IMR-90 (cell line): ENCODE measurements at regions of chr1 and their contacts with region 1.

Region 1: GRCh38 chr1:117895482-117896114 is 33.8 kb downstream of the GDAP2 start:
- DNase-seq: peak; percentile 92
- ATAC-seq: peak; percentile 89
- H3K4me3 ChIP-seq: no peak overlapping the region
- H3K27ac ChIP-seq: no peak overlapping the region
- H3K4me1 ChIP-seq: peaks cover 2% of the 10 kb centered on the region; the same call in 1 of the 2 replicates
- H3K27me3 ChIP-seq: no peaks in the 10 kb centered on the region
- CTCF ChIP-seq: peak; percentile 94
- POLR2A ChIP-seq: no peak; the same call in 1 of the 2 replicates
- RAD21 ChIP-seq: peak; percentile 97

Region 2: DNA sequence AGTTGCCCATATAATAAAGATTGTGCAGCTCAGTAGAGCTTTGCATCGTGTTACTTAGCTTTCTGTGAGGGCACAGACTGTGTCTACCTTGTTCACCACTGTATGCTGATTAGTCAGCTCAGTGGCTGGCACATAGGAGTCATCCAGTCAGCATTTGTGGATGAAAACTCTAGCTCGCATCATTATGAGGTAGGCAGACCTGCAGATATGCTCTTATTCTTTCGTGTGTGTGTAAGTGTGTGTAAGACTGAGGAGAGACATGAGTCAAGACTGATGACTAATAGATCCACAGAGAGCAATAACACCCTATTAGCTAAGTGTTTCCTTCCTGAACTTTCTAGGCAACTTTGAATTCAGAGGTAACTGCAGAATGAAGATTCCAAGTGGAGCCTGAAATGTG is 818.3 kb before region 1 on chr1:
- CTCF ChIA-PET with region 1: no interaction called
- POLR2A ChIA-PET with region 1: no interaction called
- dilution Hi-C with region 1: no loop called
- in situ Hi-C with region 1: no loop called
- intact Hi-C with region 1: loop called (anchors 10 kb)
- DNase-seq: peak; percentile 96
- ATAC-seq: peak; percentile 92
- H3K4me3 ChIP-seq: no peak overlapping the region
- H3K27ac ChIP-seq: no peak overlapping the region
- H3K4me1 ChIP-seq: peaks cover 3% of the 10 kb centered on the region
- H3K27me3 ChIP-seq: no peaks in the 10 kb centered on the region
- CTCF ChIP-seq: no peak
- POLR2A ChIP-seq: no peak
- RAD21 ChIP-seq: no peak

Region 3: GRCh38 chr1:117367047-117368018 is 528.3 kb before region 1 on chr1 and contains the start of gene MAN1A2:
- CTCF ChIA-PET with region 1: no interaction called
- POLR2A ChIA-PET with region 1: no interaction called
- dilution Hi-C with region 1: no loop called
- in situ Hi-C with region 1: no loop called
- intact Hi-C with region 1: loop called (anchors 5 kb)
- DNase-seq: peak; percentile 69
- ATAC-seq: peak; percentile 83
- H3K4me3 ChIP-seq: peak within 1 kb of the TSS; percentile 90
- H3K27ac ChIP-seq: peak within 1 kb of the TSS; percentile 97
- H3K4me1 ChIP-seq: peaks cover 6% of the 10 kb centered on the region
- H3K27me3 ChIP-seq: no peaks in the 10 kb centered on the region
- CTCF ChIP-seq: no peak
- POLR2A ChIP-seq: no peak
- RAD21 ChIP-seq: no peak
- total RNA-seq, gene MAN1A2: 29.4 and 60.8 TPM in 2 replicates

Region 4: DNA sequence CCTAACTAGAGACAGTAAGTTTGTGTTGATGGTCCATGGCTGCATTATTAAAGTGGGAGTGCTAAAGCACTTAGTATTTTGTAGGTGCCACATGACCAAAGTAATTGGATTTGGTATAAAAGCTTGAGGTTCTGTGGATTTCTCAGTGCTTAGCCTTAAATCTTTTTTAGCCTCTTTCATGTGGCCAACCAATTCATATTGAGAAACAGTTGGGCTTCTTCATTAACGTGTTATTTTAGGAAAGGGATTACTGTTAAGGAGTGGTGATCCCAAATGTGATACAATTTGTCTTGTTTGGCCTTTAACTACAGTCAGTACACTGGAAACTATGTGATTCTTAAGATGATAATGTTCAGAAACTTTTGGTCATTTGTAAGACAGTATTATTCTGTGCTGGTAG is 502.8 kb before region 1 on chr1:
- CTCF ChIA-PET with region 1: no interaction called
- POLR2A ChIA-PET with region 1: no interaction called
- dilution Hi-C with region 1: no loop called
- in situ Hi-C with region 1: no loop called
- intact Hi-C with region 1: no loop called
- DNase-seq: no peak
- ATAC-seq: no peak
- H3K4me3 ChIP-seq: no peak overlapping the region
- H3K27ac ChIP-seq: no peak overlapping the region
- H3K4me1 ChIP-seq: no peaks in the 10 kb centered on the region
- H3K27me3 ChIP-seq: no peaks in the 10 kb centered on the region
- CTCF ChIP-seq: no peak
- POLR2A ChIP-seq: no peak
- RAD21 ChIP-seq: no peak

Region 5: DNA sequence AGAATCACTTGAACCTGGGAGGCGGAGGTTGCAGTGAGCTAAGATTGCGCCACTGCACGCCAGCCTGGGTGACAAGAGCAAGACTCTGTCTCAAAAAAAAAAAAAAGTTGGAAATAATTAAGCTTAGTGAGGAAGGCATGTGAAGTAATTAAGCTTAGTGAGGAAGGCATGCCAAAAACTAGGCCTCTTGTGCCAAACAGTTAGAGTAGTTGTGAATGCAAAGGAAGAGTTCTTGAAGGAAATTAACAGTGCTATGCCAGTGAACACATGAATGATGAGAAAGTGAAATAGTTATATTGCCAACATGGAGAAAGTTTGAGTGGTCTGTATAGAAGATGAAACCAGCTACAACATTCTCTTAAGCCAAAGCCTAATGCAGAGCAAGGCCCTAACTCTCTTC is 443.4 kb before region 1 on chr1:
- CTCF ChIA-PET with region 1: no interaction called
- POLR2A ChIA-PET with region 1: no interaction called
- dilution Hi-C with region 1: no loop called
- in situ Hi-C with region 1: no loop called
- intact Hi-C with region 1: no loop called
- DNase-seq: no peak
- ATAC-seq: no peak
- H3K4me3 ChIP-seq: no peak overlapping the region
- H3K27ac ChIP-seq: no peak overlapping the region
- H3K4me1 ChIP-seq: peaks cover 3% of the 10 kb centered on the region; the same call in 1 of the 2 replicates
- H3K27me3 ChIP-seq: no peaks in the 10 kb centered on the region
- CTCF ChIP-seq: no peak
- POLR2A ChIP-seq: no peak
- RAD21 ChIP-seq: no peak

Region 6: DNA sequence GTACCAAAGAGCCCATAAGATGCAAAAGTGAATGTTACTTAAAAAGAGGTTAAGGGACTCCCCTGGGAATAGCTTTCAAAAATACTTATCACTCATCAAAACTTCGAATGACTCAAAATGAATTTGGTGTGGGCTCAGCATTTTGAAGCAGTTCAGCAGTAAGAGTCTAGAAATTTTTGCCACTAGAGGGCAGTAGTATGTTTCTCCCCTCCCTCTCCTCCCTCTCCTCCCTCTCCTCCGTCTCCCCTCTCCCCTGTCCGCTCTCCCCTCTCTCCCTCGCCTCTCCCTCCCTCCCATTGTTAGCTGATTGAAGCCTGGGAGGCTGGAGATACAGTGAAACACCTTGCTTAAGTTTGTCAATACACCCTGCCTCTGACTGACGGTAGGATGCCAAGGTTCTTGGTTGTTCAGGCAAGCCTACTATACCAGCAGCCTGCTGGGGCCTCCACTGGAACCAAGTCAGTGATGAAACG is 360.6 kb before region 1 on chr1:
- CTCF ChIA-PET with region 1: interaction called, 16 read pairs
- POLR2A ChIA-PET with region 1: no interaction called
- dilution Hi-C with region 1: no loop called
- in situ Hi-C with region 1: no loop called
- intact Hi-C with region 1: loop called (anchors 1 kb)
- DNase-seq: peak; percentile 72
- ATAC-seq: peak; percentile 83
- H3K4me3 ChIP-seq: no peak overlapping the region; the same call in 1 of the 2 replicates
- H3K27ac ChIP-seq: no peak overlapping the region
- H3K4me1 ChIP-seq: no peaks in the 10 kb centered on the region
- H3K27me3 ChIP-seq: no peaks in the 10 kb centered on the region
- CTCF ChIP-seq: peak; percentile 69
- POLR2A ChIP-seq: no peak
- RAD21 ChIP-seq: peak; percentile 64

Region 7: DNA sequence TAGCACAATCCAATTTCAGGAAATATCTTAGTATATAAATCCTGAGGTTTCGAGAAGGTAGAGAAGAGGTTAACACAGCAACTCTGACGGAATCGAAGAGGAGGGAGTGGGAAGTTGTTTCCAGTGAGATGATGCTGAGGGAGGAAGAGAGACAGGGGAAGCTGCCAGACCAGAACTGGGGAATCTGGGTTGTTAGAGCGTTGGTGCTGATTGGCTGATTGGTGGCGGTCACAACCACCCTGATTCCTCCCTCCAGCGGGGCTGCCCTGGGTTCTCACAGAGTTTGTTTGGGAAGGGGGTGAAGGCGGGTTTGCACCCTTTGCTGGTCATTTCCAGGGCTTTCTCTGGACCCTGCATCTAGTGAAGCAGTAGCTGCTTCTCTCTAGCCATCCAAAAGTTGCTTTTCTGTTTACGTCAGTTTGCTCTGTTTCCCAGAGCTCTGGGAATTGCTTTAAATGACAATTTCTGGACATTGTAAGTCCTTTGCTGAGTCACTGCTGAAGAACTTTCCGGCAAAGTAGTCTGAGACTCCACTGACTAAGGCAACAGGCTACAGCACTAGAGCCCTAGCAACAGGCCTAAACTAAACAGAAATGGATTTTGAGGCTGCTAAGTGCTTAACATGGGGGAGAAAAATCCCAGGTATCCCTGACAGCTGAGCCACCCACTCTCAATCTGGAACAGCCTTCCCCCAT is 199.7 kb before region 1 on chr1:
- CTCF ChIA-PET with region 1: no interaction called
- POLR2A ChIA-PET with region 1: no interaction called
- dilution Hi-C with region 1: no loop called
- in situ Hi-C with region 1: no loop called
- intact Hi-C with region 1: loop called (anchors 5 kb)
- DNase-seq: peak; percentile 96
- ATAC-seq: peak; percentile 91
- H3K4me3 ChIP-seq: peak overlapping the region; percentile 26; the same call in 1 of the 2 replicates
- H3K27ac ChIP-seq: peak overlapping the region; percentile 89
- H3K4me1 ChIP-seq: peaks cover 21% of the 10 kb centered on the region
- H3K27me3 ChIP-seq: no peaks in the 10 kb centered on the region
- CTCF ChIP-seq: no peak
- POLR2A ChIP-seq: peak; percentile 19; the same call in 1 of the 2 replicates
- RAD21 ChIP-seq: no peak